Heart left ventricle (tissue), 16 donors: ENCODE measurements at regions of chr7 and their contacts with region 1.

Region 1: DNA sequence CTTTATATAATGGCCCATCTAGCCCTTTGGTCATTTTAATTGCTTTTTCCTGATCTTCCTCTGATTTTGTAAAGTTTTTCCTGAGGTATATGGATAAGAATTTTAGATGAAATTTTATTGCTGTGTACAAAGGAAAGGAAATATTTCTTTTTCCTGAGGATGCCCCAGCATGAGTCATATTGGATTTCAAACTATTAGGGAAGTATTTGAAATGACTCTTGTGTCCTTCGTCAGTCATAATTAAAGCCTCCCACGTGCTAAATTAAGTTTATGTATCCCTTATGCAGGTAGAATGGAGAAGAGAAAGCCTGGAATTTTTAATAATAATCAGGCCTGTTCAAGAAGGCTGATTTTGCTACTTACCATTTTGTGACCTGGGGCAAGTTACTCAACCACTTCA is 82.6 kb upstream of the GLI3 start:
- DNase-seq: no peak
- ATAC-seq: no peak
- H3K4me3 ChIP-seq: no peak overlapping the region
- H3K27ac ChIP-seq: no peak overlapping the region
- H3K4me1 ChIP-seq: peaks cover 0 to 2% (median 0%) of the 10 kb centered on the region in 12 donors
- H3K27me3 ChIP-seq: no peaks in the 10 kb centered on the region
- CTCF ChIP-seq: no peak
- POLR2A ChIP-seq: no peak

Region 2: GRCh38 chr7:42262964-42263363 is 56.7 kb before region 1 on chr7:
- intact Hi-C with region 1: loop called in 1 of 10 experiments (anchors 10 kb)
- DNase-seq: peak; percentile 44 to 78 (median 68)
- ATAC-seq: peak; percentile 75 to 92 (median 81)
- H3K4me3 ChIP-seq: peak overlapping the region in 7 of 12 donors; percentile 35 to 47 (median 40)
- H3K27ac ChIP-seq: peak overlapping the region in 11 of 12 donors; percentile 53 to 89 (median 67)
- H3K4me1 ChIP-seq: peaks cover 0 to 2% (median 0%) of the 10 kb centered on the region in 12 donors
- H3K27me3 ChIP-seq: no peaks in the 10 kb centered on the region
- CTCF ChIP-seq: no peak
- POLR2A ChIP-seq: no peak